Natural killer cell (primary cell): ENCODE measurements at regions of chr2 and their contacts with region 1.

Region 1: GRCh38 chr2:68751397-68752339 is 17.1 kb downstream of the ARHGAP25 start:
- DNase-seq: peak; percentile 89 to 97
- ATAC-seq: peak; percentile 85 to 96 (median 94)
- H3K4me3 ChIP-seq: no peak overlapping the region
- H3K4me3 Mint-ChIP-seq: peak overlapping the region; percentile 66
- H3K27ac ChIP-seq: peak overlapping the region; percentile 77
- H3K27ac Mint-ChIP-seq: peak overlapping the region; percentile 92 to 98
- H3K4me1 ChIP-seq: peaks cover 34% of the 10 kb centered on the region
- H3K4me1 Mint-ChIP-seq: peaks cover 54 to 55% of the 10 kb centered on the region in 2 donors
- H3K27me3 ChIP-seq: no peaks in the 10 kb centered on the region
- H3K27me3 Mint-ChIP-seq: no peaks in the 10 kb centered on the region
- CTCF ChIP-seq: peak; percentile 84

Region 2: DNA sequence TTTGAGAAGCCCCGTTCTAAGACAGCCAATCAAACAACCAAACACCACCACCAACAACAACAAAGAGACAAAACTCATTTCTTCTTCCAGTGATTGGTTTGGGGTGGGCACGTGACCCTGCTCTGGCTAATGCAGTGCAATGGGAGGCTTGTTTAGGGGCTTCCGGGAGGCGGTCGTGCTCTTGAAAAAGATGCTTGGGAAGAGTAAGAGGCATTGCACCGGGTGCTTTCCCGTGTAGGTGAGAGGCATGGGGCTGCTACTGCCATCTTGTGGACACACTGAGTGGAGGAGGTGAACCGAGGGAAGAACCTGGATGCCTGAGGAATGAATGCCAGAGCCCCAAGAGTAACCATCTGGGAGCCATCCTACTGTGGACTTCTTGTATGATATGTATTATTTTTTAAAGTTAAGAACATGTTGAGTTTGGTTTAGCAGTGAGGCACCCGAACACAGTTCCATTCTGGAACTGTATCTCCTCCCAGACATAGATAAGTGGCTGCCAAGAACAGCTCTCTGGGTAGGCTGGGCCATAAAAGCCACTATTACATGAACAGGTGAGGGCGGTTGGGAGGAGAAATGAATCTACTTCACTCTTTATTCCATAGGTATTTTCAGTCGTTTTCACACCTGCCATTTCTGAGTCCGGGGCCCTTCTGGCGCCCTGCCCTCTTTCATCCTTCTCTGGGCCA is 36.2 kb before region 1 on chr2:
- intact Hi-C with region 1: loop called (anchors 5 kb)
- DNase-seq: peak; percentile 34 to 79
- ATAC-seq: peak; percentile 51 to 76 (median 72)
- H3K4me3 ChIP-seq: no peak overlapping the region
- H3K4me3 Mint-ChIP-seq: no peak overlapping the region
- H3K27ac ChIP-seq: peak overlapping the region; percentile 34
- H3K27ac Mint-ChIP-seq: peak overlapping the region in 1 of 2 donors; percentile 13
- H3K4me1 ChIP-seq: peaks cover 29% of the 10 kb centered on the region
- H3K4me1 Mint-ChIP-seq: peaks cover 41 to 48% of the 10 kb centered on the region in 2 donors
- H3K27me3 ChIP-seq: peaks cover 13% of the 10 kb centered on the region
- H3K27me3 Mint-ChIP-seq: peaks cover 68 to 100% of the 10 kb centered on the region in 2 donors
- CTCF ChIP-seq: peak; percentile 65

Region 3: DNA sequence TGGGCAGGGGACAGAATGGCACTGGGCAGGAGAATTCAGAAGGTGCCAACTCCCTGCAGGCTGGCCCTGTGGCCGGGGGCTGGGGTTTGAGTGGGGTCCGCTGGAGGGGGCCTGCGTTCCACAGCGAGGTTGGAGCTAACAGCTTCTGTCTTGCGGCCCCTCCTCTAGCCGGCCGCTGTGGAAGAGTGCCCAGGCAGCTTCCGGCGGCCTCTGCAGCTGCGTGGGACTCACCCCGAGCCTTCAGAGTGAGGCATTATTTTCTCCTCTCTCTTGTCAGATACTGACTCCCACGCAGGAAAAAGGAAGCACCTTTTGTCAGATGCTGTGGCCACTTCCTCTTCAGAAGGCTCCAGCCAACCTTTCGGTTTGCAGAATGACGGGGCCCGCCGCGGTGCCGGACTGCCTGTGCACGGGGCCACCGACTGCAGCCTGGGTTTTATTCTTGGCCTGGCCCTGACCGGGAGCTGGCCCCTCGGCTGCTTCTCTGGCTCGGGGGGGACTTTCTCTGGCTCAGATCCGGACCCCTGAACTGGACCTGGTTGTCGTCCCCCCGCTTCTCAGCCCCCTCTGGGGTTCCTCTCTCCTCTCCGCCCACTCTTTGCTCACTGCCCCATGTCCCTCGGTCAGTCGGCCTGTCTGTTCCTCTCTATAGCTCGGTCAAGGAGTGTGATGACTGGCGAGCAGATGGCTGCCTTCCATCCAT is 23.1 kb after region 1 on chr2:
- intact Hi-C with region 1: loop called (anchors 1 kb)
- DNase-seq: peak; percentile 62 to 78
- ATAC-seq: peak; percentile 55 to 83 (median 72)
- H3K4me3 ChIP-seq: peak overlapping the region; percentile 85
- H3K4me3 Mint-ChIP-seq: peak overlapping the region; percentile 96
- H3K27ac ChIP-seq: peak overlapping the region; percentile 96
- H3K27ac Mint-ChIP-seq: peak overlapping the region in 1 of 2 donors; percentile 93
- H3K4me1 ChIP-seq: peaks cover 74% of the 10 kb centered on the region
- H3K4me1 Mint-ChIP-seq: peaks cover 93 to 94% of the 10 kb centered on the region in 2 donors
- H3K27me3 ChIP-seq: no peaks in the 10 kb centered on the region
- H3K27me3 Mint-ChIP-seq: no peaks in the 10 kb centered on the region
- CTCF ChIP-seq: no peak

Region 4: DNA sequence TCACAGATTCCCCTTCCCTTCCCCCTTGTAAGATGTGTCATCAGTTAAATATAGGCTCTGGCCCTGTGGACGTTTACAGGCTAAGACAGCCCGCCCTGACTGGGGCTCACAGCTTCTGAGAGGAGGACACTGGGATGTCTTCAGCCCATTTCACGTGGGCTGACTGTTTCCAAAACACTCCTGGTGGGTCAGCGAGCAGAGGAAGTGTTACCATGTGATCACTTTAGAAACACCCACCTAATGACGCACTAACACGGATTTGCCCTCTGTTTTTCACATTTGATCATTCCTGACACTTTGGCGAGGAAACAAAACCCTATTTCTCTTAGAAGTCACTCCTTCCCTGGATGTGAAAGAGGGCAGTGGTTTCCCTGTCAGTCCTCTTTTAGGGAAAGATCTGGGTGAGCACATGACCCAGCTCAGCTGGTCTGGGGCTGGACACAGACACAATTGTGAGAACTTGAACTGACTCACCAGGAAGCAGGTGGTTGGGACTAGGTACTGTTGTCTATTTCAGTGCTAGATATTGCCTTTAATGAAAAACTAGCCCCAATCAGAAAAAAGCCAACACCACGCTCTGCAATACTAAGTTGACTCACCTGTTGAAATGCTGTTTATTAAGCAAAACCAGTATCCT is 80.7 kb after region 1 on chr2:
- intact Hi-C with region 1: loop called (anchors 1 kb)
- DNase-seq: peak; percentile 53 to 54
- ATAC-seq: peak; percentile 82 to 84 (median 83)
- H3K4me3 ChIP-seq: no peak overlapping the region
- H3K4me3 Mint-ChIP-seq: peak overlapping the region; percentile 61
- H3K27ac ChIP-seq: peak overlapping the region; percentile 35
- H3K27ac Mint-ChIP-seq: peak overlapping the region; percentile 92 to 97
- H3K4me1 ChIP-seq: peaks cover 38% of the 10 kb centered on the region
- H3K4me1 Mint-ChIP-seq: peaks cover 56 to 59% of the 10 kb centered on the region in 2 donors
- H3K27me3 ChIP-seq: no peaks in the 10 kb centered on the region
- H3K27me3 Mint-ChIP-seq: no peaks in the 10 kb centered on the region
- CTCF ChIP-seq: no peak

Region 5: DNA sequence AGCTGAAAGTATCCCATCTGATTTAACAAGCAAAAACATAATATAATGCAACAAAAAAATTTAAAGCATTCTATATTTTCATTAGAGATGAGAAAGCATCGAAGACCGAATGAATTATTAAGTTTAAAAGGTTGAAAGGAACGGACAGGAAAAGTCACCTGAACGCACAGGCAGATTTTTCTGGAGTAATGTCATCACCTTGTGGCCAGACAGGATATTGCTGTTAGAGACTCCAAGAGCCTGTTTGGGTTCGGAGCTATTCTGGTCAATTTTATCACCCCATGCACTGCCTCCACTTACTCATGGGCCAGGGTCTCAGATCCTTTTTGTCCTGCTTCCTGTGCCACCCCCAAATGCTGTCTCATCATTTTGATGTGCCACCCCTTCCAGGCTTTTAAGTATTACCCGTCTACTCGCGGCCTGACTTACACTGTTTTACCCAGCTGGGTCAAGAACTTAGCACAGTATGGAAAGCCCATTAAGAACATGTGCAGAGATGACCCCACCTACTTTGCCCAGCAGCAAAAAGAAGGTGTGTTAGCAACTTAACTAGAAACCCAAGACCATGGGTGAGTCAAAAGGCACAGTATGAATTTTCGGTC is 173.7 kb after region 1 on chr2:
- intact Hi-C with region 1: loop called (anchors 1 kb)
- DNase-seq: peak in 1 of 2 donors; percentile 85
- ATAC-seq: peak in 2 of 3 donors; percentile 82 to 93
- H3K4me3 ChIP-seq: no peak overlapping the region
- H3K4me3 Mint-ChIP-seq: no peak overlapping the region
- H3K27ac ChIP-seq: no peak overlapping the region
- H3K27ac Mint-ChIP-seq: no peak overlapping the region
- H3K4me1 ChIP-seq: no peaks in the 10 kb centered on the region
- H3K4me1 Mint-ChIP-seq: no peaks in the 10 kb centered on the region
- H3K27me3 ChIP-seq: peaks cover 4% of the 10 kb centered on the region
- H3K27me3 Mint-ChIP-seq: peaks cover 15 to 21% of the 10 kb centered on the region in 2 donors
- CTCF ChIP-seq: peak; percentile 94

Region 6: DNA sequence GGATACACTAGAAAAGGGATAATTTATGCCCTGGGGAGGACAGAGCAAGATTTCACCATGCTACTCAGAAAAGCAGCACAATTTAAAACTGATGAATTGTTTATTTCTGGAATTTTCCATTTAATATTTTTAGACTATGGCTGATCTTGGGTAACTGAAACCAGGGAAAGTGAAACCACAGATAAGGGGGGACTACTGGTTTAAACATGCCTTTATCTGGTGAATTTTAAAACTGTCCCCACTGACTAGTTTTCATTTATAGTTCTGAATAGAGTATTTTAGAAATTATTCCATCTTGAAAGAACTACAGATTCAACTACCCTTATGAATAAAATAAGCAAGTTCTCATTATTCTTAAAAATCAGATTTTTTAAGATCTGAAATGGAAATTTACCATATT is 670.5 kb after region 1 on chr2:
- intact Hi-C with region 1: no loop called
- DNase-seq: no peak
- ATAC-seq: no peak
- H3K4me3 ChIP-seq: no peak overlapping the region
- H3K4me3 Mint-ChIP-seq: no peak overlapping the region
- H3K27ac ChIP-seq: no peak overlapping the region
- H3K27ac Mint-ChIP-seq: no peak overlapping the region
- H3K4me1 ChIP-seq: no peaks in the 10 kb centered on the region
- H3K4me1 Mint-ChIP-seq: no peaks in the 10 kb centered on the region
- H3K27me3 ChIP-seq: no peaks in the 10 kb centered on the region
- H3K27me3 Mint-ChIP-seq: no peaks in the 10 kb centered on the region
- CTCF ChIP-seq: no peak